Right ventricle myocardium superior (tissue), 1 donor: ENCODE measurements at regions of chrX and their contacts with region 1.

Region 1: GRCh38 chrX:114959729-114960128 is 57.7 kb downstream of the IL13RA2 start:
- DNase-seq: no peak
- ATAC-seq: no peak

Region 2: GRCh38 chrX:114619874-114620273 is 339.9 kb before region 1 on chrX:
- intact Hi-C with region 1: loop called (anchors 10 kb)
- DNase-seq: no peak
- ATAC-seq: no peak

Region 3: GRCh38 chrX:114766541-114766940 is 193.2 kb before region 1 on chrX:
- intact Hi-C with region 1: loop called (anchors 10 kb)
- DNase-seq: no peak
- ATAC-seq: no peak

Region 4: DNA sequence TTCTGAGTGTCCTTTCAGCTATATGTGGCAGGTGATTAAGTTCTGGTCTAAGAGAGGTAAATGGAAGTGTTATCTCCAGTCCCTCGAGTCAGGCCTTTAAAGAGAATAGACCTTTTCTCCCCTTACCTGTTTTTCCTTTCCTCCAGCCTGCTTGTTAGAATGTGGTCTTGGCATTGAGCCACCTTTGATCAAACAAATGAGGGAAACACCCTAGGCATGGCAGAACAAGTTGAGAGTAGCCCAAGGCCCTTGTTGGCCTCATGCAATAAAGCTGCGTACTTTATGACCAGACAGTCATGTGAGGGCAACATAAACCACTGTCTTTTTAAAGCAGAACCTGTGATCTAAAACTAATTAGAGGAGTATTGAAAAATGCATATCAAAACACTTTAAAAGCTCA is 70.9 kb after region 1 on chrX:
- intact Hi-C with region 1: no loop called
- DNase-seq: no peak
- ATAC-seq: no peak